ENCODE measurements at regions of chr9 and their contacts with region 1.

Region 1: DNA sequence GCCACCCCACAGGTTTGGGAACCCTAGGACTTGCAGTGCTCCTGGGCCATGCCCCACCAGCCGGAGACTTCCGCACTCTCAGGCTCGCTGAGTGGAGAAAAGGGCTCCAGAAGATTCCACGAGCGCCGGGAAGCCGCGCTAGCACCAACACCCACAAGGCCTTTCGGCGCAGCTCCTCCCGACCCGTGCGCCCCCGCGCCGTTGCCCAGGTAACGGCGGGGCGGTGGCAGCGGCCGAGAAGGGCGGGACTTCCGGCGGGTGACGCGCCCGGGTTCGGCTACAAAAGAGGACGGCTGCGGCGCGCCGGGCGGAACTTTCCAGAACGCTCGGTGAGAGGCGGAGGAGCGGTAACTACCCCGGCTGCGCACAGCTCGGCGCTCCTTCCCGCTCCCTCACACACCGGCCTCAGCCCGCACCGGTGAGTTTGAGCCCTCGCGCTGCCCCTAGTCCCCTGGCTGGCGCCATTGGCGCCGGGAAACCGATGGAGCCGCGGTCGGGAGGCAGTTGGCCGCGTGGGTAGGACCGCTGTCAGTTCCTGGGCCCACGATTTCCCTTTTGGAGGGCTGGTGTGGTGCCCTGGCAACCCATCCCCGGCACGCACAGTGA is at the start of gene DNAJA1:
- DNase-seq: peak; percentile 95
- H3K4me3 Mint-ChIP-seq: peak within 1 kb of the TSS; percentile 96
- H3K27ac Mint-ChIP-seq: peak within 1 kb of the TSS; percentile 92
- H3K4me1 Mint-ChIP-seq: peaks cover 71% of the 10 kb centered on the region
- H3K27me3 Mint-ChIP-seq: no peaks in the 10 kb centered on the region
- total RNA-seq, gene DNAJA1: 141 to 142 TPM

Region 2: DNA sequence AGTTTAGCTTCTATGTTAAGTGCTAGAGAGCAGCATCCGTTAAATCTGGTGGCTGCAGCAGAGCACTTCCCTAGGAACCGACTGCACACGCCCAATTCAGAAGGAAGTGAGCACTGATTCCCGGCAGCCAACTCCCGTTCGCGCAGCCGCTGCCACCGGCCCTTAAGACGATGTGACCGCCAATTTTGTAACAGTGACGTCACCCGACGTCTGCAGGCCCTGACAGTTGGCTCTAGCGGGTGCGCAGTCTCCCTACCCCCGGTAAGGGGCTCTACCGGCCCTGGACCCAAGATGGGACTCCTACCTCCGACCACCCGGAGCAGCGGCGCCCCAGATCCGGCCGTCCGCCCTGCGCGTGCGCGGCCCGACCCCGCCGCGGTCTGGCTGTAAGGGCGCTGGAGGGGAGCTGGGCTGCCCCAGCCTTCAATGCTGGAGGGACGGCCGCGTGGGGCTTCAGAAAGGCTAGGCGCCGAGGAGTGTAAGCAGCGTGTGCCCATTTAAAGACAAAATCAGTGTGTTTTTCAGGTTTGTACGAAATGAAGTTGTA is 19.1 kb after region 1 on chr9:
- CTCF ChIA-PET with region 1: interaction called, 3 read pairs
- POLR2A ChIA-PET with region 1: interaction called, 54 read pairs
- DNase-seq: peak; percentile 77
- H3K4me3 Mint-ChIP-seq: peak overlapping the region; percentile 76
- H3K27ac Mint-ChIP-seq: peak overlapping the region; percentile 67
- H3K4me1 Mint-ChIP-seq: peaks cover 22% of the 10 kb centered on the region
- H3K27me3 Mint-ChIP-seq: no peaks in the 10 kb centered on the region

Region 3: DNA sequence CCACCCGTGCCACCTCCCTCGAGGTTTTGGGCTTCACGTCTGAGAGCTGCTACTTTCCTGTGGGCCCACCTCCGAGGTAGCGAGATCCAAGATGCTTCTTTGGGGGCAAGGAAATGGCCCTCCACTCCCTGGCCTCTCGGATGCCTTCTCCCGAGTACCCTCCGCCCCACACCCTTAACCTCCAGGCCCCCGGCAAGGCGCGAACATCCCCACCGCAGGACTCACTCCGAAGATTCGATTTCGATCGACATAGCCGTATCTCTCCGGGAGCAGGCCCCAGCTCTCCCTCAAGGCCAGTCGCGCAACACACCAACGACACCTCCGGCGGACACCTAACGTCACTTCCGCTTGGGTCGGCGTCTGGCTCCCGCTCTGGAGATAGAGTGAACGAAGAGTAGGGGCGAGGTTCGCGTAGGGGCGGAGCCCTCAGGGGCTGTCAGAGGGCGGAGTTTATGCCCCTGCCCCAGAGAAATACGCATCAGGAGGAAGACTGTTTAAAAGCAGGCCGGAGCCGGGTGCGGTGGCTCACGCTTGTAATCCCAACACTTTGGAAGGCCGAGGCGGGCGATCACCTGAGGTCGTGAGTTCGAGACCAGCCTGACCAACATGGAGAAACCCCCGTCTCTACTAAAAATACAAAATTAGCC is 51.4 kb after region 1 on chr9 and contains the start of gene SMU1:
- CTCF ChIA-PET with region 1: interaction called, 3 read pairs
- POLR2A ChIA-PET with region 1: interaction called, 48 read pairs
- DNase-seq: peak; percentile 97
- H3K4me3 Mint-ChIP-seq: peak within 1 kb of the TSS; percentile 100
- H3K27ac Mint-ChIP-seq: peak within 1 kb of the TSS; percentile 99
- H3K4me1 Mint-ChIP-seq: peaks cover 52% of the 10 kb centered on the region
- H3K27me3 Mint-ChIP-seq: no peaks in the 10 kb centered on the region
- total RNA-seq, gene SMU1: 22.5 to 22.9 TPM

Region 4: DNA sequence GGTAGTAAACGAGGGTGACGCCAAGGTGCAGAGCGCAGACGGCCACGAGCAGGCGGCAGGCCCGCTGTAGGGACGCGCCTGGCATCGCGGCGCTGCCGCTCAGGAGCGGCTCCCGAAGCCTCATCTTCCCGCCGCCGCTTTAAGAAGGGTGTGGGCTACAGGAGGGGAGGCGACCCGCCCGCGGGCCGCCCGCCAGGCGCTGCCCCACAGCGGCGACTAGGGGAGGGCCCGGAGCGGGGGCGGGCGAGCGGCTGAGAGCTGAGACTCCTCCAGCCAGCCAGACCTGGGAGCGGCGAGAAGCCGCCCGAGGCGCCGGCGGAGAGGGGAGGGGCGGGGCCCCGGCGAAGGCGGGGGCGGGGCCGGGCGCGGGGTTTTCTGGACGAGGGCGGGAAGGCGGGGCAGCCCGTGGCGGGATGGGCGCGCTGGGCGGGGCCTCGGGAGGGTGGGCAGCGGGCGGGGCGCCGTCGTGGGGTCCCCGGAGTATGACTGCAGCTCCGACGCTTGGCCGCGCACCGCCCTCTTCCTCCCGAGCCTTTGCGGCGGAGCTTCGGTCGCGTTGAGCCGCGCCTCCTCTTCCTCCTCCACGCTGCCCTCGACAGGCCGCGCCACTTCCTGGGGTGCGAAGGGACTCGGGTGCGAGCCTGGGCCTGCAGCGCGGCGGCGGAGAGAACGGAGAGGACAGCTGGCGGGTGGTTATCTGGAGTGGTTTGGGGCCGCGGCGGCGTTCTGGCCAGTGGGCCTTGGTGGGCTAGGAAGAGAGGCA is 142.2 kb after region 1 on chr9 and contains the start of gene B4GALT1:
- CTCF ChIA-PET with region 1: interaction called, 3 read pairs
- POLR2A ChIA-PET with region 1: interaction called, 20 read pairs
- DNase-seq: peak; percentile 98
- H3K4me3 Mint-ChIP-seq: peak within 1 kb of the TSS; percentile 89
- H3K27ac Mint-ChIP-seq: peak within 1 kb of the TSS; percentile 94
- H3K4me1 Mint-ChIP-seq: peaks cover 60% of the 10 kb centered on the region
- H3K27me3 Mint-ChIP-seq: no peaks in the 10 kb centered on the region
- total RNA-seq, gene B4GALT1: 69.2 to 70.8 TPM

Region 5: GRCh38 chr9:33264473-33265177 is 239.6 kb after region 1 on chr9 and contains the starts of genes BAG1 and CHMP5:
- CTCF ChIA-PET with region 1: no interaction called
- POLR2A ChIA-PET with region 1: interaction called, 44 read pairs
- DNase-seq: peak; percentile 100
- H3K4me3 Mint-ChIP-seq: peak within 1 kb of the TSS; percentile 98
- H3K27ac Mint-ChIP-seq: peak within 1 kb of the TSS; percentile 97
- H3K4me1 Mint-ChIP-seq: peaks cover 66% of the 10 kb centered on the region
- H3K27me3 Mint-ChIP-seq: no peaks in the 10 kb centered on the region
- total RNA-seq, gene BAG1: 56.3 to 57.1 TPM
- total RNA-seq, gene CHMP5: 149 TPM